ENCODE measurements at regions of chr14 and their contacts with region 1.

Region 1: GRCh38 chr14:24013654-24014514 is 25.2 kb downstream of the DHRS4L2 start:
- DNase-seq: peak; percentile 71
- ATAC-seq: peak; percentile 98
- H3K4me3 ChIP-seq: no peak overlapping the region
- H3K27ac ChIP-seq: no peak overlapping the region
- H3K4me1 ChIP-seq: peaks cover 2% of the 10 kb centered on the region; the same call in 1 of the 2 replicates
- H3K27me3 ChIP-seq: no peaks in the 10 kb centered on the region
- CTCF ChIP-seq: peak; percentile 96
- POLR2A ChIP-seq: 0 out of 2 replicates have a peak, but pooled peaks have one; percentile 39
- RAD21 ChIP-seq: peak; percentile 96

Region 2: GRCh38 chr14:24036169-24036962 is 22.5 kb after region 1 on chr14:
- CTCF ChIA-PET with region 1: no interaction called
- POLR2A ChIA-PET with region 1: no interaction called
- dilution Hi-C with region 1: no loop called
- in situ Hi-C with region 1: no loop called
- intact Hi-C with region 1: loop called (anchors 1 kb)
- DNase-seq: peak; percentile 49
- ATAC-seq: peak; percentile 94
- H3K4me3 ChIP-seq: peak overlapping the region; percentile 55
- H3K27ac ChIP-seq: peak overlapping the region; percentile 37
- H3K4me1 ChIP-seq: no peaks in the 10 kb centered on the region
- H3K27me3 ChIP-seq: peaks cover under 1% of the 10 kb centered on the region; the same call in 1 of the 2 replicates
- CTCF ChIP-seq: peak; percentile 67
- POLR2A ChIP-seq: no peak
- RAD21 ChIP-seq: peak; percentile 53

Region 3: GRCh38 chr14:24051789-24052655 is 38.1 kb after region 1 on chr14 and contains the start of gene CARMIL3:
- CTCF ChIA-PET with region 1: no interaction called
- POLR2A ChIA-PET with region 1: no interaction called
- dilution Hi-C with region 1: no loop called
- in situ Hi-C with region 1: no loop called
- intact Hi-C with region 1: loop called (anchors 1 kb)
- DNase-seq: peak; percentile 34
- ATAC-seq: peak; percentile 96
- H3K4me3 ChIP-seq: peak within 1 kb of the TSS; percentile 52
- H3K27ac ChIP-seq: no peak within 1 kb of the TSS
- H3K4me1 ChIP-seq: peaks cover 5% of the 10 kb centered on the region; the same call in 1 of the 2 replicates
- H3K27me3 ChIP-seq: peaks cover 41% of the 10 kb centered on the region
- CTCF ChIP-seq: no peak
- POLR2A ChIP-seq: no peak
- RAD21 ChIP-seq: no peak
- total RNA-seq, gene CARMIL3: under 0.01 TPM in 1 of 2 replicates, not detected in the other

Region 4: GRCh38 chr14:24058260-24058950 is 44.5 kb after region 1 on chr14:
- CTCF ChIA-PET with region 1: no interaction called
- POLR2A ChIA-PET with region 1: no interaction called
- dilution Hi-C with region 1: no loop called
- in situ Hi-C with region 1: no loop called
- intact Hi-C with region 1: loop called (anchors 2 kb)
- DNase-seq: peak; percentile 64
- ATAC-seq: peak; percentile 98
- H3K4me3 ChIP-seq: no peak overlapping the region
- H3K27ac ChIP-seq: no peak overlapping the region
- H3K4me1 ChIP-seq: no peaks in the 10 kb centered on the region
- H3K27me3 ChIP-seq: peaks cover 34% of the 10 kb centered on the region; the same call in 1 of the 2 replicates
- CTCF ChIP-seq: peak; percentile 93
- POLR2A ChIP-seq: no peak
- RAD21 ChIP-seq: peak; percentile 94

Region 5: GRCh38 chr14:24093901-24094761 is 80.2 kb after region 1 on chr14 and contains the start of gene PCK2:
- CTCF ChIA-PET with region 1: no interaction called
- POLR2A ChIA-PET with region 1: no interaction called
- dilution Hi-C with region 1: no loop called
- in situ Hi-C with region 1: no loop called
- intact Hi-C with region 1: loop called (anchors 1 kb)
- DNase-seq: peak; percentile 88
- ATAC-seq: peak; percentile 94
- H3K4me3 ChIP-seq: peak within 1 kb of the TSS; percentile 72
- H3K27ac ChIP-seq: peak within 1 kb of the TSS; percentile 80
- H3K4me1 ChIP-seq: peaks cover 8% of the 10 kb centered on the region
- H3K27me3 ChIP-seq: no peaks in the 10 kb centered on the region
- CTCF ChIP-seq: 0 out of 2 replicates have a peak, but pooled peaks have one; percentile 12
- POLR2A ChIP-seq: peak; percentile 89
- RAD21 ChIP-seq: no peak
- total RNA-seq, gene PCK2: 11.1 and 13.4 TPM in 2 replicates

Region 6: GRCh38 chr14:24108336-24108874 is 94.5 kb after region 1 on chr14:
- CTCF ChIA-PET with region 1: no interaction called
- POLR2A ChIA-PET with region 1: no interaction called
- dilution Hi-C with region 1: no loop called
- in situ Hi-C with region 1: no loop called
- intact Hi-C with region 1: loop called (anchors 1 kb)
- DNase-seq: no peak
- ATAC-seq: no peak; the same call in 1 of the 2 replicates
- H3K4me3 ChIP-seq: no peak overlapping the region
- H3K27ac ChIP-seq: no peak overlapping the region
- H3K4me1 ChIP-seq: no peaks in the 10 kb centered on the region
- H3K27me3 ChIP-seq: no peaks in the 10 kb centered on the region
- CTCF ChIP-seq: no peak
- POLR2A ChIP-seq: no peak
- RAD21 ChIP-seq: no peak

Region 7: GRCh38 chr14:24241829-24242443 is 228.1 kb after region 1 on chr14:
- CTCF ChIA-PET with region 1: no interaction called
- POLR2A ChIA-PET with region 1: no interaction called
- dilution Hi-C with region 1: no loop called
- in situ Hi-C with region 1: no loop called
- intact Hi-C with region 1: loop called (anchors 5 kb)
- DNase-seq: peak; percentile 89
- ATAC-seq: peak; percentile 93
- H3K4me3 ChIP-seq: peak overlapping the region; percentile 82
- H3K27ac ChIP-seq: peak overlapping the region; percentile 90
- H3K4me1 ChIP-seq: peaks cover 13% of the 10 kb centered on the region
- H3K27me3 ChIP-seq: no peaks in the 10 kb centered on the region
- CTCF ChIP-seq: peak; percentile 45
- POLR2A ChIP-seq: no peak
- RAD21 ChIP-seq: no peak

Region 8: GRCh38 chr14:24271134-24271833 is 257.4 kb after region 1 on chr14 and contains the start of gene RABGGTA:
- CTCF ChIA-PET with region 1: no interaction called
- POLR2A ChIA-PET with region 1: no interaction called
- dilution Hi-C with region 1: no loop called
- in situ Hi-C with region 1: no loop called
- intact Hi-C with region 1: no loop called
- DNase-seq: peak; percentile 83
- ATAC-seq: peak; percentile 100
- H3K4me3 ChIP-seq: peak within 1 kb of the TSS; percentile 63
- H3K27ac ChIP-seq: peak within 1 kb of the TSS; percentile 89
- H3K4me1 ChIP-seq: peaks cover 5% of the 10 kb centered on the region; the same call in 1 of the 2 replicates
- H3K27me3 ChIP-seq: no peaks in the 10 kb centered on the region
- CTCF ChIP-seq: peak; percentile 87
- POLR2A ChIP-seq: peak; percentile 63; the same call in 1 of the 2 replicates
- RAD21 ChIP-seq: 0 out of 2 replicates have a peak, but pooled peaks have one; percentile 30
- total RNA-seq, gene RABGGTA: 25.6 and 27.2 TPM in 2 replicates